ENCODE measurements at regions of chr14 and their contacts with region 1.

Region 1: DNA sequence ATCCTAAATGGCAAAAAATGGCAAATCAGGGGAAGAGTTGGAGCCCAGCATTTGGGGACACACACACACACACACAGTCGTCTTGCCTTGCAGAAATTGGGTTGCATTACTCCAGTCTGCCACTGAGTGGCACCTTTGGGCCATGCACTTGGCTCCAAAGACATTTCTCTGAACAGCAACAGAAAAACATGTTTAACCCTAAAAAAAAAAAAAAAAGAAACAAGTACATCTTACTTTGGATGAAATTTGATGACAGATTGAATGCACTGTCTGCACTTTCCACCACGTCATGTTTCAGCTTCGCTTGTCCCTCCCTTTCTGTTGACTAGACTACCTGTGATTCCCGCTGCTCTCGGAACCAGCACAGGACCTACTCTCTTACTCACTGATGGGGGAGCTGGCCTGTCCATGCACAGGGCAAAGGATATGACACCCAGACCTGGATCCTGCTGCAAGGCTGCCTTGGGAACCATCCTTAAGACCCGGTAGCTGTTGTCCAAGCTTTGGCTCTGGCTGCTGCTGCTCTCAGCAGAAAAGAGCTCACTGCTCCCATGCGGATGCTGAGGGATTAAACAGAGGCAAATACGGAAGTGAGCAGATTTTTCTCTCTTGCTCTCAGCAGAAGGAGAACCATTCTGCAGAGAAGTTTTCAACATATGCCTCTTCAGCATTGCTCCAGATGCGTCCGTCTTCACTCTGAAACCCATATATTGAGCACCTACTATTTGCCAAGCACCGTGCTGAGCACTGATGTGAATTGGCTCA is 376.8 kb downstream of the DPF3 start:
- DNase-seq: peak; percentile 53
- ATAC-seq: peak; percentile 46
- H3K4me3 ChIP-seq: no peak overlapping the region
- H3K27ac ChIP-seq: peak overlapping the region; percentile 86; the same call in 1 of the 2 replicates
- H3K4me1 ChIP-seq: peaks cover 56% of the 10 kb centered on the region
- H3K27me3 ChIP-seq: no peaks in the 10 kb centered on the region
- CTCF ChIP-seq: peak; percentile 86 to 95 (median 93)
- EP300 ChIP-seq: no peak
- POLR2A ChIP-seq: no peak
- RAD21 ChIP-seq: peak; percentile 97

Region 2: DNA sequence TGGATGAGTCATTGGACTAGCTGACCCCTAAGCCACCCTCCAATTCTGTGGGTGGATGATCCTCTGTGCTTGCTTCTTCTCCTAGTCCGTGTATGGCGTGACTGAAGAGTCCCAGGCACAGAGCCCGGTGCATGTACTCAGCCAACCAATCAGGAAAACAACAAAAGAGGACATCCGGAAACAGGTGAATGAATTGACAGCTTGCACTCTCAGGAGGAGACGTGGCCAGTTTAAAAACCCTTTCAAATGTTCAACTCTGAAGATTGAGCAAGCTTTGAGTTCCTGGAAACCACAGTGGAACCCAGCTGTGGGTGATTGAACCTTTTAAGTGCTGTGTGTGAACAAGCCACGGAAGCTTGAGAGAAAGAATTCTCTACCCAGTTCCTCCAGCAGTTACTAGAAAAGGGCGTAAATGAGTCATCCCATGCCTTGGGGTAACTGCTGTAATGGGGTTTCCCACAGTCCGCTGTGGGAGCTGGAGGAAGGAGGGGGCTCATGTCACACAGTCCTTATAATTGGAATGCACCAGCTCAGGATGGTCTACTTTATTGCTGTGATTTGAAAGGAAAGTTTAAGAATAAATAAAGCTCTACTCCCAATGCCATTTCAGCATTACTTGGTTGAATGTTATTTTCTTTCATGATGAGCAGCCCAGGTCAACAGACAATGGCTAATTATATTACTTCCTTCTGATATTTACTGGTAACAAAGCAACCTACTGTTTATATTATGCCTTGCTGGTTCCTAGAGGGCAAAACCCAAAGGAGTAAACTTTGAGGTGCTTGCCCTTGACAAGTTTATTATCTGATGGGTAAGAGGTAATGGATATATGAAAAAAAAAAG is 40.2 kb before region 1 on chr14:
- CTCF ChIA-PET with region 1: interaction called, 128 read pairs
- POLR2A ChIA-PET with region 1: no interaction called
- RAD21 ChIA-PET with region 1: interaction called, 90 read pairs
- SMC1A ChIA-PET with region 1: interaction called, 84 read pairs
- in situ Hi-C with region 1: no loop called
- intact Hi-C with region 1: loop called (anchors 2 kb)
- DNase-seq: peak; percentile 100
- ATAC-seq: peak; percentile 86
- H3K4me3 ChIP-seq: 0 out of 2 replicates have a peak overlapping the region, but pooled peaks have one; percentile 24
- H3K27ac ChIP-seq: peak overlapping the region; percentile 93
- H3K4me1 ChIP-seq: peaks cover 56% of the 10 kb centered on the region
- H3K27me3 ChIP-seq: no peaks in the 10 kb centered on the region
- CTCF ChIP-seq: no peak
- EP300 ChIP-seq: peak; percentile 97
- POLR2A ChIP-seq: 0 out of 2 replicates have a peak, but pooled peaks have one; percentile 41
- RAD21 ChIP-seq: peak; percentile 32

Region 3: DNA sequence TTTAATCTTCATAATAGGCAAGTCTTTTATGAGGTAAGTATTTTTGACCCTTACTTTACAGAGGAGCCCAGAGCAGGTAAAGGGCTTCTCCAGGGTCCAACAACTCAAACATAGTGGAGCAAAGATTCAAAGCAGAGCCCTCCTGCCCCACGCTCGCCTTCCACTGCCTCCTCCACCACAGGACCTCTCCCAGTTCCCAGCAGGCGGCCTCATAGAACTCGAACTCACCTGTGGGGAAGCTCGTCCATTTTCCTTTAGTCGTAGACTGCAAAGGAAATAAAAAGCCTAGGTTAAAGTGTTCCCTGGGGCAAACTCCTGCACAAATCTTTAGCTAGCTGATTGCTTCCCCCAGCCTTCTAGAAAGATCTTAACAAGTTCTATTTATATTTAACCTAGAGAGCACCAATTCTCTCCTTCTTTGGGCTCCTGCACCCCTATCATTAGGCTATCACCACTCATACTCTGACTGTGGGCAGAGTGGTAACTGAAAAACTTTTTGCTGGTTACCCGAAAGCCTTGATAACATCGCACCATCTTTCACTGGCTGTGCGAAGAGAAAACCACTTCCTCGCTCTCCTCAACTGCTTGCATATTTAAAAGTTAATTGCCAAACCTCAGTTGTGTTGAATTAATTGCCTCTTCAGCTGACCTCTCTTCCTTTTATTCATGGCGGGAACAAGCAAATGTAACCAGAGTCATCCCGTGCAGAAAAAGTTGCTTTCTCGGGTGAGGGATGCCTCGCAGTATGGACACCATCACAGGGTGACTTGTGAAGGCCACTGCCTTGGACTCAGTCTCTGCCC is 77.2 kb after region 1 on chr14:
- CTCF ChIA-PET with region 1: interaction called, 6 read pairs
- POLR2A ChIA-PET with region 1: no interaction called
- RAD21 ChIA-PET with region 1: interaction called, 8 read pairs
- SMC1A ChIA-PET with region 1: interaction called, 10 read pairs
- in situ Hi-C with region 1: no loop called
- intact Hi-C with region 1: loop called (anchors 2 kb)
- DNase-seq: peak; percentile 74
- ATAC-seq: peak; percentile 92
- H3K4me3 ChIP-seq: no peak overlapping the region
- H3K27ac ChIP-seq: no peak overlapping the region
- H3K4me1 ChIP-seq: peaks cover 28% of the 10 kb centered on the region
- H3K27me3 ChIP-seq: no peaks in the 10 kb centered on the region; a peak in 1 of 4 replicates
- CTCF ChIP-seq: no peak
- EP300 ChIP-seq: peak; percentile 76 to 89; a peak in 3 of 4 replicates
- POLR2A ChIP-seq: no peak
- RAD21 ChIP-seq: no peak

Region 4: DNA sequence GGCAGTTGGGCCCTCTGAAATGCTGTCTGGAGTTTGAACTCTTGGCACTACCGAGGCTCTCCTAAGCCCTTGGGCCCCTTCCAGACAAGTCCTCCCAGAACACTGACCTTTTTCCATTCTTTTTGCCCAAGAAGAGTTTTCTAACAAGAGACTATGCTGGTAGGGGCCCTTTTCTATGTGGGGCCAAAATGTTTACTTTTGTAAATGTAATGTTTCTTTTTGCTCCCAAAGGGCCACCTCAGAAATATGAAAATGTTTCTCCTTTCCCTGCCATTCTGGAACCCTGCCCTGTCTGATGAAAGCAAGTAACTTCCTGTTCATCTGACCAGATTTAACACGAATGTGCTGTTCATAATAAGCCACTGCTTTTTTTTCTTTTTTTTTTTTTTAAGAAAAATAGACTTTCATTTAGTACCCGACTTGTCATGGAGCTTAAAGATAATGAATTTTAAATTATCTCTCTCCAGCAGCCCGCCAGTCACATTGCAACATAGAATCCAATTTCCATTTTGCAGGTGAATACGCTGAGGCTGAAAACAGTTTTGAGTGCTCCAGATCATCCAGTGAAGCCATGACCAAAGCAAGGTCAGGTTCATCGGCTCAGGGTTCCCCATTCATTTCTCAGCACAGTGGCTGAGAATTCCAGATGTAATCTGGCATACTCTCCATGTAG is 206.9 kb after region 1 on chr14:
- CTCF ChIA-PET with region 1: interaction called, 11 read pairs
- POLR2A ChIA-PET with region 1: no interaction called
- RAD21 ChIA-PET with region 1: interaction called, 3 read pairs
- SMC1A ChIA-PET with region 1: interaction called, 14 read pairs
- in situ Hi-C with region 1: no loop called
- intact Hi-C with region 1: loop called (anchors 5 kb)
- DNase-seq: no peak
- ATAC-seq: no peak
- H3K4me3 ChIP-seq: no peak overlapping the region
- H3K27ac ChIP-seq: no peak overlapping the region
- H3K4me1 ChIP-seq: no peaks in the 10 kb centered on the region
- H3K27me3 ChIP-seq: no peaks in the 10 kb centered on the region
- CTCF ChIP-seq: no peak
- EP300 ChIP-seq: no peak
- POLR2A ChIP-seq: no peak
- RAD21 ChIP-seq: no peak

Region 5: GRCh38 chr14:72888636-72889201 is 371.6 kb after region 1 on chr14:
- CTCF ChIA-PET with region 1: interaction called, 13 read pairs
- POLR2A ChIA-PET with region 1: no interaction called
- RAD21 ChIA-PET with region 1: interaction called, 31 read pairs
- SMC1A ChIA-PET with region 1: interaction called, 15 read pairs
- in situ Hi-C with region 1: no loop called
- intact Hi-C with region 1: no loop called
- DNase-seq: no peak
- ATAC-seq: no peak
- H3K4me3 ChIP-seq: 0 out of 2 replicates have a peak overlapping the region, but pooled peaks have one; percentile 8
- H3K27ac ChIP-seq: no peak overlapping the region
- H3K4me1 ChIP-seq: peaks cover 14% of the 10 kb centered on the region
- H3K27me3 ChIP-seq: no peaks in the 10 kb centered on the region
- CTCF ChIP-seq: no peak
- EP300 ChIP-seq: no peak
- POLR2A ChIP-seq: no peak
- RAD21 ChIP-seq: no peak

Region 6: GRCh38 chr14:72948481-72949138 is 431.5 kb after region 1 on chr14:
- CTCF ChIA-PET with region 1: interaction called, 205 read pairs
- POLR2A ChIA-PET with region 1: interaction called, 5 read pairs
- RAD21 ChIA-PET with region 1: interaction called, 54 read pairs
- SMC1A ChIA-PET with region 1: interaction called, 94 read pairs
- in situ Hi-C with region 1: loop called (anchors 5 kb)
- intact Hi-C with region 1: loop called (anchors 1 kb)
- DNase-seq: peak; percentile 11
- ATAC-seq: peak; percentile 85
- H3K4me3 ChIP-seq: no peak overlapping the region
- H3K27ac ChIP-seq: no peak overlapping the region
- H3K4me1 ChIP-seq: no peaks in the 10 kb centered on the region
- H3K27me3 ChIP-seq: no peaks in the 10 kb centered on the region
- CTCF ChIP-seq: peak; percentile 77 to 89 (median 83)
- EP300 ChIP-seq: no peak
- POLR2A ChIP-seq: no peak
- RAD21 ChIP-seq: peak; percentile 55

Region 7: DNA sequence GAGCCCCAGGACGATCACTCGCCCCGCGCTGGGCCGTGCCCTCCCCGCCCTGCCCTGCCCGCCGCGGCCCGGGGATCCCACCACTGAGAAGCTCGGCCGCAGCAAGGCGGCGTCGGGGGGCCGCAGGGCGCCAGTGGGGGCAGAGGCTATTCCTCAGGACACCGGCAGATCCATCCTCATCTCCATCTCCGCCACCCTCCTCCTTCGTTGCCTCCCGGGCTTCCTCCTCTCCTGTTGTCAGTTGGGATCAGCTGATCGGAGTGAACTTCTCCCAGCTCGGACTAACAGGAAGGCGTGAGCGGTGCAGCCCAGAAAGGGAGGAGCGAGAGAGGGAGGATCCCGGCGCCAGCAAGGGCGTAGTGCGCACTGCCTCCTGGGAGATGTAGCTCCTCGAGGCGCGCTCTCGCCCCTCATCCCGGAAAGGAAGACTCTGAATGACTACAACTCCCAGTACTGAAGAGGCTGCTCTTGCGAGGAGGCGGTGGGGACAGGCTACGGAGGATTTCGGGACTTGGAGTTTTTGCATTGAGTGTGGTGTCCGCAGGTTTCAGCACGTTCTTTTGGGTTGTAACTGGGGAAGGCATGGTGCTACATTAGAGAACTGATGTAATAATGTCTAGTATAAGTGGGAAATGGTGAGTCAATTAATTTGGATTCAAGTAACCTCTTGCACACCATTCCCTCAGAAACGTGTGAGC is 509.9 kb after region 1 on chr14 and contains the start of gene ZFYVE1:
- CTCF ChIA-PET with region 1: no interaction called
- POLR2A ChIA-PET with region 1: no interaction called
- RAD21 ChIA-PET with region 1: no interaction called
- SMC1A ChIA-PET with region 1: no interaction called
- in situ Hi-C with region 1: no loop called
- intact Hi-C with region 1: no loop called
- DNase-seq: peak; percentile 94
- ATAC-seq: peak; percentile 99
- H3K4me3 ChIP-seq: peak within 1 kb of the TSS; percentile 94
- H3K27ac ChIP-seq: peak within 1 kb of the TSS; percentile 52; the same call in 1 of the 2 replicates
- H3K4me1 ChIP-seq: no peaks in the 10 kb centered on the region
- H3K27me3 ChIP-seq: no peaks in the 10 kb centered on the region
- CTCF ChIP-seq: no peak
- EP300 ChIP-seq: no peak
- POLR2A ChIP-seq: peak; percentile 78
- RAD21 ChIP-seq: no peak
- polyA plus RNA-seq, gene ZFYVE1: 1.2 to 1.4 TPM